Right lobe of liver (tissue), 6 donors: ENCODE measurements at regions of chr9 and their contacts with region 1.

Region 1: GRCh38 chr9:101601904-101602765 is 7.4 kb upstream of the PPP3R2 start:
- DNase-seq: no peak
- ATAC-seq: peak; percentile 74 to 79 (median 76)
- H3K4me3 ChIP-seq: no peak overlapping the region
- H3K27ac ChIP-seq: no peak overlapping the region
- H3K4me1 ChIP-seq: peaks cover 0 to 24% (median 0%) of the 10 kb centered on the region in 4 donors
- H3K27me3 ChIP-seq: no peaks in the 10 kb centered on the region
- CTCF ChIP-seq: peak; percentile 62 to 70 (median 68)
- POLR2A ChIP-seq: no peak

Region 2: DNA sequence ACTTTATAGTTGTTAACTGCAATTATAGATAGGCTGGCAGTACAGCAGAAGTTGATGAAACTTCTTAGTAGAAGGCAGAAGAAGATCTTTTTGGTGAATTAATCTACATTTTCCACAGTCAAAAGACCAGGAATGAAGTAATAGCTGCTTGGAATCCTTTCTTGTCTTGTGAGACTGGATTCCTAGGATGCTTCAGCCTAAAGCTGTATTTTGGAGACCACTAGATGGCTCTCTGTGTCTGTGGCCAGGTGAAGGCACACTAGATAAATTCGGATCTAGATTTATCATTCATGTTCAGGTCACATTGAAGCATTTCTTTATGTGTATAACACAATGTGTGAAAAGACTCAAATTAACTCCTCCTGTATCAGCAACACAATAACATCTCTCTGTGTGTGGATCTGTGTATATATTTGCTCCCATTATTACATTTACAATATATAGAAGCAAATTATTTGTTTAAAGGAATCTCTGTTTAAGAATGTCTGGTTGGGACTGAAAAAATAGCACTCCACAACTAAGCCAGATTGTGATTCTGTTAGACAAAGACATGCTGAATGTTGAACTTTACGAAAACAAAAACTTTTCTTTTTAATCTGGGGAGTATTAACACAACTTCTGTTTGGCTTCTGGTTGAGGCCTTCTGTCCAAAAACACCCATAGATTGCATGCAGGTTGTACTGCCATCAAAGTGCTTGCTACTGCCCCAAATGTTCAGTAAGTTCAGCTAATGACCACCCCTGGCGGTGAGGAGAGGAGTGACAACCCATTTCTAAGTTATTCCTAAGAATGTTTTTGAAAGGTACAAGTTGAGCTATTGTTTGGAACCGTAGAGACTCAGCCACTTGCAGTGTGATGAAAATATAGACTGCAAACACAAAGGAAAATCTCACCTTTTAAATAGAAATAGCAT is 125.7 kb after region 1 on chr9:
- intact Hi-C with region 1: loop called in 1 of 2 experiments (anchors 10 kb)
- DNase-seq: no peak
- ATAC-seq: peak; percentile 79 to 87 (median 82)
- H3K4me3 ChIP-seq: no peak overlapping the region
- H3K27ac ChIP-seq: no peak overlapping the region
- H3K4me1 ChIP-seq: no peaks in the 10 kb centered on the region
- H3K27me3 ChIP-seq: no peaks in the 10 kb centered on the region
- CTCF ChIP-seq: peak; percentile 39 to 62 (median 56)
- POLR2A ChIP-seq: no peak